ENCODE measurements at regions of chr3 and their contacts with region 1.

Region 1: GRCh38 chr3:36540888-36541518 is 160.7 kb downstream of the STAC start:
- DNase-seq: peak; percentile 71
- ATAC-seq: peak; percentile 78
- H3K4me3 ChIP-seq: no peak overlapping the region
- H3K27ac ChIP-seq: no peak overlapping the region
- H3K4me1 ChIP-seq: no peaks in the 10 kb centered on the region
- H3K27me3 ChIP-seq: no peaks in the 10 kb centered on the region
- CTCF ChIP-seq: peak; percentile 96

Region 2: DNA sequence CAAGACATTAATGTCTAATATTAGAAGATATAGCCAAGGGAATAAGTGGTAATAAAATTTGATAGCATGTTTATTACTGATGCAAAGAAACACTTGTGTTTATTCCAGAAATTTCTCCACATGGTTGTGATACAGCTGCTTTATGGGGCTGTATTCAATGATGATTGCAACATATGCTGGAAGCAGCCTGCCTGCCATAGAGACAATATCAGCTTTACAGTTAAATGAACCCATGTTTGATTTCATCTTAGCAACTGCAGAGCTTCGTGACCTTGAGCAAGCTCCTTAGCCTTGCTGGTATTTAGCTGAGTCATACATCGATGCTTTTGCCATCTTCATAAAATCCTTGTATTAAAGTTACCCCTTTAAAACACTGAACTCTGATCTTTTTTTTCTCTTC is 328.8 kb before region 1 on chr3:
- CTCF ChIA-PET with region 1: no interaction called
- POLR2A ChIA-PET with region 1: no interaction called
- intact Hi-C with region 1: loop called (anchors 10 kb)
- DNase-seq: peak; percentile 33
- ATAC-seq: peak; percentile 52
- H3K4me3 ChIP-seq: no peak overlapping the region
- H3K27ac ChIP-seq: no peak overlapping the region
- H3K4me1 ChIP-seq: peaks cover 11% of the 10 kb centered on the region
- H3K27me3 ChIP-seq: no peaks in the 10 kb centered on the region
- CTCF ChIP-seq: no peak

Region 3: GRCh38 chr3:36814776-36815175 is 273.8 kb after region 1 on chr3:
- CTCF ChIA-PET with region 1: no interaction called
- POLR2A ChIA-PET with region 1: no interaction called
- intact Hi-C with region 1: no loop called
- DNase-seq: no peak
- ATAC-seq: peak; percentile 54
- H3K4me3 ChIP-seq: no peak overlapping the region
- H3K27ac ChIP-seq: no peak overlapping the region
- H3K4me1 ChIP-seq: no peaks in the 10 kb centered on the region
- H3K27me3 ChIP-seq: peaks cover 9% of the 10 kb centered on the region; the same call in 1 of the 2 replicates
- CTCF ChIP-seq: peak; percentile 49; the same call in 1 of the 2 replicates